Astrocyte of the cerebellum (primary cell): ENCODE measurements at regions of chr15 and their contacts with region 1.

Region 1: DNA sequence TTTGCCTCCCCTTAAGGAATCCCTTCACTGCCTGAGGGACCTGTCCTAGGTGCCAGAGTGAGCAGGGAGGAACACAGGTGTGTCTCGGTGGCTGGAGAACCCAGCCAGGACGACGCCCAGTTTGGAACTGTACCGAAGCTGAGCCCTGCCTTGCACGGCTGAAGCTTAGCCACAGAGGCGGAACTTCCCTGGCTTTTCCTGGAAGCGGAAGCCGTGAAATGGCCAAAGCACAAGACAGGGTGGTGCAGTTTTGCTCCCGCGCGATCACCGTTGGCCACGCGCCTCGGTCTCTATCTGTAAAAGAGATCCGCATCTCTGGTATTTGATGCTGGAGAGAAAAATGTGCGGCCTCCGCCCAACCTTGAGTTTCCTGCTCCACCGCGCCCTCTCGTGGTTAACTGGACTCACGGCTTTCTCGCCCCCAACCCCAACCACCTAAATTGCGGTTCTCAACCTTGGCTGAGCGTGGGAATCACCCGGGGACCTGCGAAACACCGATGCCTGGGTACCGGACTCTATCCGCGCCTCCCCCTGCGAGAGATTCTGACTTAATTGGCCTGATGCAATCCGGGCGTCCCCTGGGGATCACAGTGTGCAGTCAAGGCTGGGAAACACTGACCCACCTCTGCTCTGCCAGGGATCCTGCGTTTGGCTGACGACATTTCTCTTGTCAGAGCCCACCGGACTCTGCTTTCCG is 70.7 kb upstream of the ABHD2 start:
- DNase-seq: peak; percentile 54
- H3K4me3 ChIP-seq: peak overlapping the region; percentile 24
- CTCF ChIP-seq: peak; percentile 89

Region 2: DNA sequence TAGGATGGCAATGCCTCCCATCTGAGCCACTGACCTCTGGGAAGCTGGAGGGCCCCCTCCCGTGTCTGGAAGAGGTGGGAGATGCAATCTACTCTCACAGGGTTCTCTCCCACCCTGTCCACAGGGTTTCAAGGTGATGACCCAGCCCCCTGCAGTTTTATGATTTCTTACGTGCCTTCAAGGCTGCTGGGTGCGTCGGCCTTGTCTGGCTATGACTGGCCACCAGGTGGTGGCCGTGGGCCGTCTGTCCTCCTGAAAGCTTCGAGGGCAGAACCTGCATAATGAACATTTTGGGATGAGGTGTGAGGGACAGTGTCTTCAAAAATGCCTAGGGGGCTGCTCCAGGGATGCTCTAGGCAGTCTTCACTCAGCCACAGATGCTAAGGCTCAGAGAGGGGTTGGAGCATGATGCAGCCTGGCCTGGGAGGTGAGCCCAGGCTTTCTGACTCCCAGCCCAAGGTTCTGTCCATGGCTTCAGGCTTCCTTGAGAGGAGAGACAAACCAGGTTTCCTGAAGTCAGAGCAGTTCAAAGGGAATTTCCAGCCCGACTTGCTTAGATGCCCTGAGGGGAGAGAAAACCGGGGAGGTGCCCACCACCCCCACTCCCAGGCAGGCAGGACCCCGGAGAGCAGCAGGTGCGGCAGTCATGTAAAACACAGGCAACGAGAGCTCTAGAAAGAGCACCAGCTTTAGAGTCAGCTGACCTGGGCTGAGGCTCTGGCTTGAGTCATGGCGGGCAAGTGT is 360.0 kb before region 1 on chr15:
- in situ Hi-C with region 1: loop called (anchors 25 kb)
- DNase-seq: no peak
- H3K4me3 ChIP-seq: no peak overlapping the region
- CTCF ChIP-seq: peak; percentile 87

Region 3: GRCh38 chr15:88932271-88932874 is 85.1 kb before region 1 on chr15:
- in situ Hi-C with region 1: no loop called
- DNase-seq: no peak
- H3K4me3 ChIP-seq: no peak overlapping the region
- CTCF ChIP-seq: no peak

Region 4: DNA sequence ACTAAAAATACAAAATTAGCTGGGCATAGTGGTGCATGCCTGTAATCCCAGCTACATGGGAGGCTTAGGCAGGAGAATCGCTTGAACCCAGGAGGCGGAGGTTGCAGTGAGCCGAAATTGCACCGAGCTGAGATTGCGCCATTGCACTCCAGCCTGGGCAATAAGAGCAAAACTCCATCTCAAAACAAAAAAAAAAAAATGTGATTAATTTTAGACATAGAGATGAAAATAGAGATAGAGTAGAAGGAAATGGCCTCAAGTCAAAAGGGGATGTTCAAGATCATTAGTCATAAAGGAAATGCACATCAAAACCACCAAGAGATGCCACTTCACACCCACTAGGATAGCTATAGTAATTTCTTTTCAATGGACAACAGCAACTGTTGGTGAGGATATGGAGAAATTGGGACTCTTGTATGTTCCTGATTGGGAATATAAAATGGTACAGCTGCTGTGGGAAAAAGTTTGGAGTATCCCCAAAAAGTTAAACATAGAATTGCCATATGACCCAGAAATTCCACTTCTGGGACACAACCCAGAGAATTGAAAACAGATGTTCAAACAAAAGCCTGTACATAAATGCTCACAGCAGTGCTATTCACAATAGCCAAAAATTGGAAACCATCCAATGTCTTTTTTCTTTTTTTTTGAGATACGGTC is 126.1 kb after region 1 on chr15:
- in situ Hi-C with region 1: no loop called
- DNase-seq: peak; percentile 91
- H3K4me3 ChIP-seq: no peak overlapping the region
- CTCF ChIP-seq: no peak